Heart right ventricle (tissue), 16 donors: ENCODE measurements at regions of chr22 and their contacts with region 1.

Region 1: GRCh38 chr22:41688365-41689211 is at the start of gene SNU13:
- DNase-seq: peak; percentile 92 to 93
- ATAC-seq: peak; percentile 95 to 99 (median 98)
- H3K4me3 ChIP-seq: peak within 1 kb of the TSS; percentile 52 to 95 (median 84)
- H3K27ac ChIP-seq: peak within 1 kb of the TSS; percentile 73 to 99 (median 96)
- H3K4me1 ChIP-seq: peaks cover 5 to 27% (median 20%) of the 10 kb centered on the region in 9 donors
- H3K27me3 ChIP-seq: no peaks in the 10 kb centered on the region
- CTCF ChIP-seq: peak in 3 of 9 donors; percentile 7 to 19 (median 15)
- total RNA-seq, gene SNU13: 183 to 274 (median 195) TPM

Region 2: DNA sequence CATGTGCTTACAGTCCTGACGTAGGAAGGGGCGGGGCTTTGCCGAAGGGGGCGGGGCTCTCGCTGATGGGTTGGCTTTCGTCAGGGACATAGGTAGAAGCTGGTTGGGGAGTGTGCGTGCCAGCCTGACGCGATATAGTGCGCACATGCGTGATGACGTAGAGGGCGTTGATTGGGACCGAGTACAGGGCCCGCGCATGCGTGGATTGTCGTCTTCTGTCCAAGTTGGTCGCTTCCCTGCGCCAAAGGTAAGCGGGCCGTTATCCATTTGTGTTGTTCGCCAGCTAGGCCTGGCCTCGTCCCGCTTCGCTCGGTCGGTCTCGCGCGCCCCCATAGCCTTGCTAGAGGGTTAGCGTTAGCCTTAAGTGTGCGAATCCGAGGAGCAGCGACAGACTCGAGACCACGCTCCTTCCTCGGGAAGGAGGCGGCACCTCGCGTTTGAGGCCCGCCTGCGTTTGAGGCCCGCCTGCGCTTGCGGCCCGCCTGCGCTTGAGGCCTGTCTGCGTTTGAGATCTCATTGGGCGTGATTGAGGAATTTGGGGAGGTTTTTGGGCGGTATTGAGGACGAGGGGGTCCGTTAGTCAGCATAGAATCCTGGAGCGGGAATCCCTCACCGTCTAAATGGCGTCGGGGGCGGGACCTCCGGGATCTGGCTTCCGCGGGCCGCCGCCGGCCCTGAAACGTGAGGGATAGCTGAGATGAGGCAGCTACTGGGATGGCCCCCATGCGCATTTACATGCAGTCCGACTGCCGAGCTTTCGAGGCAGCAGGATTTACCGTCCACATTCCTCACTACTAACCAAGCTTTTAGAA is 67.3 kb before region 1 on chr22 and contains the start of gene XRCC6:
- intact Hi-C with region 1: loop called in 1 of 10 experiments (anchors 1 kb)
- DNase-seq: peak; percentile 100
- ATAC-seq: peak; percentile 97 to 99 (median 98)
- H3K4me3 ChIP-seq: peak within 1 kb of the TSS; percentile 75 to 99 (median 87)
- H3K27ac ChIP-seq: peak within 1 kb of the TSS; percentile 89 to 99 (median 96)
- H3K4me1 ChIP-seq: peaks cover 10 to 54% (median 39%) of the 10 kb centered on the region in 9 donors
- H3K27me3 ChIP-seq: no peaks in the 10 kb centered on the region
- CTCF ChIP-seq: no peak
- total RNA-seq, gene XRCC6: 152 to 192 (median 181) TPM

Region 3: GRCh38 chr22:41666661-41667258 is 21.8 kb before region 1 on chr22:
- intact Hi-C with region 1: loop called in 2 of 10 experiments (anchors 2 kb)
- DNase-seq: peak; percentile 85 to 91
- ATAC-seq: peak; percentile 87 to 96 (median 92)
- H3K4me3 ChIP-seq: peak overlapping the region in 9 of 10 donors; percentile 12 to 55 (median 48)
- H3K27ac ChIP-seq: peak overlapping the region; percentile 71 to 94 (median 88)
- H3K4me1 ChIP-seq: peaks cover 0 to 24% (median 5%) of the 10 kb centered on the region in 9 donors
- H3K27me3 ChIP-seq: no peaks in the 10 kb centered on the region
- CTCF ChIP-seq: peak; percentile 95 to 100 (median 99)